Transverse colon (tissue), 4 donors: ENCODE measurements at regions of chr6 and their contacts with region 1.

Region 1: DNA sequence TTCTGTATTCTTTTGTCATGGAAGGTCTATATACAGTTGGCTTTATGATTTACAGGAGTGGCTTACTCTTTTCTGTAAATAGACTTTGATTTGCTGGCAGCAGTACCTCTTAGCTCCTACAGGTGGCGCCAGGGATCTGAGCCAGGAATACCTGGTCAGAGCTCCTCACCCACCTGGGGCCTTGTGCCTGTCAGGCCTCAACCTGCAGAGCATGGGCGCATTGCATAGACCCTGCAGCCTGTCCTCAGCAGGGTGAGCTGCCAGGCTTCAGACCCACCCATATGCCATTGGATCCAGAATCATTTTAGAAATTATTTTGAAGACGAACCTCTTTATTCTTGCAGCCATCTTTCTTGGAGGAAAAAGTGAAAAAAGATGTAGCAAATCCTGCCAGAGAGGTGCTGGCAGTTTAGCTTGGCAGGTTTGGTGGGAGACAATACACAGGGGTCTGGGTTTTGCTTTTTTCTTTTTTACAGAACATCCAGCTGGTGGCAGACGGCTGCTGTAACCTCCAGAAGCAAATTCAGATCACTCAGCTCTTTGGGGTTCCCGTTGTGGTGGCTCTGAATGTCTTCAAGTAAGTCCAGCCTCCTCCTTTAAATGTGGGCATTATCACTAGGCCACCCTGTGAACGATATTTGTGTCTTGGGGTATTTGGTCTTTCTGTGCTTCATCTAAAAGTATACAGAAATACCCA is 149.1 kb downstream of the MTHFD1L start:
- DNase-seq: peak; percentile 78
- H3K4me3 ChIP-seq: no peak overlapping the region
- H3K27ac ChIP-seq: peak overlapping the region in 3 of 4 donors; percentile 4 to 45 (median 5)
- H3K4me1 ChIP-seq: peaks cover 0 to 5% (median 2%) of the 10 kb centered on the region in 4 donors
- H3K27me3 ChIP-seq: no peaks in the 10 kb centered on the region
- CTCF ChIP-seq: peak; percentile 96 to 99 (median 98)
- EP300 ChIP-seq: no peak
- POLR2A ChIP-seq: no peak

Region 2: GRCh38 chr6:150928882-150929281 is 85.7 kb before region 1 on chr6:
- in situ Hi-C with region 1: no loop called
- intact Hi-C with region 1: no loop called
- DNase-seq: no peak
- H3K4me3 ChIP-seq: no peak overlapping the region
- H3K27ac ChIP-seq: no peak overlapping the region
- H3K4me1 ChIP-seq: no peaks in the 10 kb centered on the region
- H3K27me3 ChIP-seq: no peaks in the 10 kb centered on the region
- CTCF ChIP-seq: peak in 2 of 5 experiments; percentile 14 to 18
- EP300 ChIP-seq: no peak
- POLR2A ChIP-seq: no peak

Region 3: DNA sequence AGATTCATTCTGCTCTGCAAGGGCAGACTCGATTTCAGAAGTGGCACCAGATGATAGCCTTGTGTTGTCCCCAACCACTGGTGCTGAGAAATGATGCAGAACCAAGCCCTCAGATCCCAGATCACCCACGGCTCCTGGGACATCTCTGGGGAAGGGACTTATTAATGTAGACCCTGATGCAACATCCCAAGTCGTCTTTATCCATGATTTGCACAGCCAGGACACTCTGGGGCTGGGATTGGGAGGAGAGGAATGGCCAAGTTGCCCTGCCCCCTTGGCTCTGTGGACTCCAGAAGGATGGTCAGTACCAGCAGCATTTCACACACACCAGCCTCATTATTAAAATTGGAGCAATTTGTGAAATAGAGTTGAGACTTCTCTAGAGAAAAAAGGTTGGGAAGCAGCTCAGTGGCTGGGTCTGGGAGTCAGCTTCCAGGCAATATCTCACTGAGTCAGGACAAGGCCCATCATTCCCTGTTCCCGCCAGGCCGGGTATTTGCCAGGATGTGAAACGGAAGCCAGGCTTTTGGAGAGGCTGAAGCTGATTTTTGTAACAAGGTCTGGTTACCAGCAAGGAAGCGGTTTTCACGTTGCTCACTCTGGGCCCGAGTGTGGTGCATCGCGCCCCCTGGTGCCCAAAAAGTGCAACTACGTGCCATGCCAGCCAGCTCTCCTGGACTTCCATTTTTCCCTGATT is 309.4 kb after region 1 on chr6:
- in situ Hi-C with region 1: loop called in 3 of 4 experiments (anchors 5 to 10 kb)
- intact Hi-C with region 1: loop called (anchors 5 kb)
- DNase-seq: peak; percentile 83
- H3K4me3 ChIP-seq: no peak overlapping the region
- H3K27ac ChIP-seq: peak overlapping the region; percentile 68 to 85 (median 74)
- H3K4me1 ChIP-seq: peaks cover 11 to 22% (median 20%) of the 10 kb centered on the region in 4 donors
- H3K27me3 ChIP-seq: peaks cover 26% of the 10 kb centered on the region
- CTCF ChIP-seq: peak; percentile 96 to 98 (median 97)
- EP300 ChIP-seq: peak; percentile 87
- POLR2A ChIP-seq: no peak

Region 4: DNA sequence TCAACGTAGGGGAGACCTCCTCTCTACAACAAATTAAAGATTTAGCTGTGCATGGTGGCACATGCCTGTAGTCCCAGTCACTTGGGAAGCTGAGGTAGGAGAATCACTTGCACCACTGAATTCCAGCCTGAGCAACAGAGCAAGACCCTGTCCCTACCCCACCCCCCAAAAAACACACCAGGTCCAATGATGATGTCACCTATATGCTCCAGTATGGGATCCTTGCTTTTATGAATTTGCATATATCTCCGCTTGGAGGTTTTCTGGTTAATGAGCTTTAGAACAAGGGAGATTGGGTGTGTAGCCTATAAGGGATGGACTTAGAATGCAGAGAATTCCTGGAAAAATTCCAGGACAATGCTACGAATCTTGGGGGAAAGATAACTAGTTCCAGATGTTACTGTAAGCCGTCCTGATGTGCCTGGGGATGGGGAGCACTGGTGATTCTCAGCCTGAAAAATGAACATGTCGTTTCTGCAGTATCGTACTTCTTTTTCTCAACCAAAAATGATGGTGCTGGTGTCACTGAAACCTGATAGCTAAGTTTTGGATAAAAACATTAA is 315.7 kb after region 1 on chr6:
- in situ Hi-C with region 1: loop called in 3 of 4 experiments (anchors 5 to 10 kb)
- intact Hi-C with region 1: loop called (anchors 5 kb)
- DNase-seq: no peak
- H3K4me3 ChIP-seq: no peak overlapping the region
- H3K27ac ChIP-seq: peak overlapping the region in 2 of 4 donors; percentile 13 to 41
- H3K4me1 ChIP-seq: peaks cover 3 to 8% (median 8%) of the 10 kb centered on the region in 4 donors
- H3K27me3 ChIP-seq: peaks cover 18% of the 10 kb centered on the region
- CTCF ChIP-seq: no peak
- EP300 ChIP-seq: no peak
- POLR2A ChIP-seq: no peak